ENCODE measurements at regions of chr15 and their contacts with region 1.

Region 1: GRCh38 chr15:83207622-83208411 is at the start of gene HDGFL3:
- DNase-seq: peak; percentile 72
- H3K4me3 ChIP-seq: peak within 1 kb of the TSS; percentile 89
- H3K27ac ChIP-seq: peak within 1 kb of the TSS; percentile 47
- H3K4me1 ChIP-seq: peaks cover 25% of the 10 kb centered on the region
- CTCF ChIP-seq: peak; percentile 57
- total RNA-seq, gene HDGFL3: 29.3 and 57.6 TPM in 2 replicates

Region 2: GRCh38 chr15:82749951-82750830 is 457.6 kb before region 1 on chr15:
- CTCF ChIA-PET with region 1: no interaction called
- POLR2A ChIA-PET with region 1: no interaction called
- intact Hi-C with region 1: loop called (anchors 5 kb)
- DNase-seq: peak; percentile 92
- H3K4me3 ChIP-seq: peak overlapping the region; percentile 90
- H3K27ac ChIP-seq: peak overlapping the region; percentile 75
- H3K4me1 ChIP-seq: peaks cover 36% of the 10 kb centered on the region
- CTCF ChIP-seq: no peak

Region 3: DNA sequence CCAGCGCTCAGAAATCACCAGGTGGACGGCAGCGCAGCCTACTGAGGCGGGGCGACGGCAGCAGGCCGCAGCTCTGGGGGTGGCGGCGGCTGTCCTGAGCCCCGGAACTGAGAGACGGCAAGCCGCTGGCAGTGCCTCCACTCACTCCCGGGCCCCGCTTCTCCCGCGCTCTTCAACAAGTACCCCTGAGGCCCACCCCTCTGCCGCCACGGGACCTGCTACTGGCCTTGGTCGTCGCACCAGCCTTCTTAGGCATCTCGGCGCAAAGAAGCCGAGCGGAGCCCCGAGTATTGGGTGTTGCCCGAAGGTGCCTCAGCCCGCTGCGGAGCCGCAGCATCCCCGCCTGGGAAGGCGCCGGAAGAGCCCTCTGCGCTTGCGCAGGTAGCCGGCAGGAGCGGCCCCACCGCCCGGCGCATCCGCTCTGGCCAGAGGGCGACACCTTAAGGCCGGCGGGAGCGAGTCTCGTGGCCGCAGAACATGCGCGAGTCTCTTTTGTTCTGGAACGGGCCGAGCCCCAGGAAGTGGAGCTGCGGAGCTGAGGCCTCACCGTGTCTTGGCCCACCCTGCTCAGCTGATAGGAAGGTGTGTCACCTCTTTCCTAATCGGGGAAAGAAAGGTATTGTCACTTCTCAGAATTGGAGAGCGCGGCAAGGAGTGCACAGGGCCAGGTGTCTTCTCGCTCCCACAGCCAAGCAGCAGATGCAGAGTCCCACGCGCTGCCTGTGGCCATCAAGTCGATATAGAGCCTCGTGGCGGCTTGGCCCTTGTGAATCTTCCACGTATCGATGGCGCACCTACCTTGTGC is 196.3 kb before region 1 on chr15 and contains the start of gene C15orf40:
- CTCF ChIA-PET with region 1: interaction called, 3 read pairs
- POLR2A ChIA-PET with region 1: interaction called, 6 read pairs
- intact Hi-C with region 1: loop called (anchors 1 kb)
- DNase-seq: peak; percentile 96
- H3K4me3 ChIP-seq: peak within 1 kb of the TSS; percentile 93
- H3K27ac ChIP-seq: peak within 1 kb of the TSS; percentile 74
- H3K4me1 ChIP-seq: peaks cover 23% of the 10 kb centered on the region
- CTCF ChIP-seq: peak; percentile 77
- total RNA-seq, gene C15orf40: 29.9 and 33.8 TPM in 2 replicates

Region 4: GRCh38 chr15:83108266-83109226 is 99.3 kb before region 1 on chr15:
- CTCF ChIA-PET with region 1: no interaction called
- POLR2A ChIA-PET with region 1: no interaction called
- intact Hi-C with region 1: loop called (anchors 2 kb)
- DNase-seq: peak; percentile 93
- H3K4me3 ChIP-seq: peak overlapping the region; percentile 74
- H3K27ac ChIP-seq: peak overlapping the region; percentile 74
- H3K4me1 ChIP-seq: peaks cover 23% of the 10 kb centered on the region
- CTCF ChIP-seq: no peak

Region 5: DNA sequence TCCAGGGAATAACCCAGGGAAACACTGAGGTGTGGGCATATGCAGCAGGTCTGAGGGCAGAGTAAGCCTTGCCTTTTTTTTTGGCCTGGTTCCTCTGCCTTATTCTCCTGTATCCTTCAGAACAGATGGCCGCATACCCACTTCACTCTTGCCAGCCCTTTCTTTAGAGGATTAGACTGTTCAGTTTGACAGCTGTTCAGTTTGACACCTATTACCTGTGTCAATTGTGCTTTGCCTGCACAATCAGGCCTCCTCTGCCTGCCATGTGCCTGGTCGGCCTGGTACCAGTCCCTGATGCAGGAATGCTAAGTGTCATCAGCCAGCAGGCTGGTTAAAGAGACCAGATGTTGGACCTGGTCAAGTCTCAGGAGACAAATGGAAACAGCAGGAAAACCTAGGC is 78.0 kb before region 1 on chr15:
- CTCF ChIA-PET with region 1: no interaction called
- POLR2A ChIA-PET with region 1: no interaction called
- intact Hi-C with region 1: no loop called
- DNase-seq: no peak
- H3K4me3 ChIP-seq: no peak overlapping the region
- H3K27ac ChIP-seq: no peak overlapping the region
- H3K4me1 ChIP-seq: no peaks in the 10 kb centered on the region
- CTCF ChIP-seq: no peak